ENCODE measurements at regions of chr7 and their contacts with region 1.

Region 1: GRCh38 chr7:36639826-36640225 is 84.5 kb downstream of the AOAH start:
- DNase-seq: peak; percentile 23 to 86 (median 71)
- ATAC-seq: peak; percentile 89 to 93
- H3K4me3 Mint-ChIP-seq: peak overlapping the region; percentile 53 to 88 (median 68)
- H3K27ac Mint-ChIP-seq: peak overlapping the region; percentile 92 to 99 (median 98)
- H3K4me1 Mint-ChIP-seq: peaks cover 48 to 97% (median 89%) of the 10 kb centered on the region in 4 donors
- H3K27me3 Mint-ChIP-seq: no peaks in the 10 kb centered on the region

Region 2: DNA sequence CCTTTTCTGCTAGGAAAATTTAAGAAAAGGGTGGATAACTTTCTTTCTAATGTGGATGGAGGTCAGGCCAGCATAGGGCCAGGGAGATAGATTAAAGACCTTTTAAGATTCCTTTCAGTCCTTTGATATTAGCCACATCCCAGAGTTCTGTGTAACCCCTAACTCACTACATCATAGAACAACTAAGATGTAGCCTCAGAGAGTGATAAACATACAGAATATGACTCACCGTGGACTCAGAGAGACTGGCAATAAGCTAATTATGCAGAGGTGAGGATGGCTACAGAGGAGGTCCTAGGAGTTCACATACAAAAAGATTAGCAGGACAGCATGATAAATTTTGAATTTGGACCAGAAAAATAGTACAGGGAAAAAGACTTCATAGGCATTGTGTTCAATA is 56.5 kb before region 1 on chr7:
- POLR2A ChIA-PET with region 1: no interaction called
- DNase-seq: no peak
- ATAC-seq: no peak
- H3K4me3 Mint-ChIP-seq: no peak overlapping the region
- H3K27ac Mint-ChIP-seq: peak overlapping the region in 4 of 10 donors; percentile 26 to 70 (median 38)
- H3K4me1 Mint-ChIP-seq: peaks cover 7 to 23% (median 13%) of the 10 kb centered on the region in 4 donors
- H3K27me3 Mint-ChIP-seq: no peaks in the 10 kb centered on the region

Region 3: GRCh38 chr7:36600869-36601530 is 38.8 kb before region 1 on chr7:
- POLR2A ChIA-PET with region 1: interaction called, 97 read pairs
- DNase-seq: no peak
- ATAC-seq: peak in 1 of 2 donors; percentile 80
- H3K4me3 Mint-ChIP-seq: peak overlapping the region in 2 of 10 donors; percentile 10 to 11
- H3K27ac Mint-ChIP-seq: peak overlapping the region in 8 of 10 donors; percentile 7 to 66 (median 47)
- H3K4me1 Mint-ChIP-seq: peaks cover 22 to 48% (median 44%) of the 10 kb centered on the region in 4 donors
- H3K27me3 Mint-ChIP-seq: no peaks in the 10 kb centered on the region

Region 4: DNA sequence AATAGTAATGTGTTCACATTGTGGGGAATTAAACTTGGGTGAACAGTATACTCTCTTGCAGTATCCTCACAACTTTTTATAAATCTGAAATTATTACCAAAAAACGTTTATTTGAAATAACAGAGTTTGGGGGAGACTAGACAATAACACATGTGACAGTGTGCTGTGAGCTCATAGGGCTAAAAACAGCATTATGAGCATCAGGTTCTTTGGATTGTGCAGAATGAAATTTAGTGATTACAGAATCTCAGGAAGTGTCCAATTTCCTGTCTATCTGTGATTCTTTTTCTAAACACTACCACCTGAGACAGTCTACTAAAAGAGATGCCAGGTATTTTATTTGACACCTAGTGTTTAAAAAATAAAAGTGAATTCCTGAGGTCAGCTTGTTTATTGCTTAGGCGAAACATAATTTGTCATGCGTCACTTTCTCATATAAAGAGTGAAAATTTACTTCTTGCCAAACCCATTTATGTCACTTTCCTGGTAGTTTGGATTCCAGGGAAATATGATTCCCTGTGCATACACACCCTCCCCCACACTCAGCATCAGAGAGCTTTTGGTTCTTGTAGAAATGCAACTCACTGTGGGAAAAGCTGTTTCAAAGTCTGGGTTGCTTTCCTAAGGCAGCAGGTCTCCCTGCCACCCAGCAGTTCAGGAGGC is 13.3 kb after region 1 on chr7:
- POLR2A ChIA-PET with region 1: interaction called, 15 read pairs
- DNase-seq: no peak
- ATAC-seq: no peak
- H3K4me3 Mint-ChIP-seq: peak overlapping the region in 1 of 10 donors; percentile 47
- H3K27ac Mint-ChIP-seq: peak overlapping the region in 7 of 10 donors; percentile 37 to 90 (median 75)
- H3K4me1 Mint-ChIP-seq: peaks cover 33 to 55% (median 41%) of the 10 kb centered on the region in 4 donors
- H3K27me3 Mint-ChIP-seq: no peaks in the 10 kb centered on the region

Region 5: DNA sequence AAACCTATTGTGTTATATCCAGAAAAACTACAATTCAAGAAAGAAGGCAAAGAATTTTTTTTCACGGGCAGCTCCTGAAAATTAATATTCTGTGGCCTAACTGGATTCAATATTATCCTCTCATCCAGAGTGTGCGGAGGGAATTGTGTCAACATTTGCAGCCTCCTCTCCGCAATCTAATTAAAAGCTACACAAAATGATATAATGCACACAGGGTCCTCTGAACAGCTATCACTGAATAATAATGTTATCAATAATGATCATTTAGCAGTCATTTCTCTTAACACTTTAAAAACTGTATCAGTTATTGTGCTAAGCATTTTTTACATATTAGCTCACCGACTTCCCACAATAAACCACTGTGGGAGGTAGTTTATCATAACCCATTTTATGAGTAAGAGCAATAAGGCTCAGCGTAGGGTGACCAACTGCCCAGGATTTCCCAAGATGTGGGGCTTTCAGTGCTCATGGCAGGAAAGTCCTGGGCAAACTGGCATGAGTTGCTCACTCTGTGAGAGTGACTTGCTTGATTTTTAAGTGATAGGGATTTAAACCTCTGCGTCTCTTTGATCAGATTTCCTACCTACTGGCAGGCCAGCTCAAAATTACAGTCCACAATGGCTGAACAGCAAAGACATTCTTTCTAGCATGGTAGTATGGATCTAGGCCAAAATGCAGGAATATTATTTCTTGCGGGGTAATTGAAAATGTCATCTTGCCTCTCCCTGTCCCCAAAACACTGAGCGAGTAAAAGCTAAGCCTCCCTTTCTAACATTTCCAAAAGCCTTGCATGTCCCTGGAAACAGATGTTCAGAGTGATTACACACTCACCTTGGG is 18.7 kb after region 1 on chr7:
- POLR2A ChIA-PET with region 1: interaction called, 15 read pairs
- DNase-seq: no peak
- ATAC-seq: no peak
- H3K4me3 Mint-ChIP-seq: peak overlapping the region in 1 of 10 donors; percentile 19
- H3K27ac Mint-ChIP-seq: peak overlapping the region in 9 of 10 donors; percentile 1 to 90 (median 52)
- H3K4me1 Mint-ChIP-seq: peaks cover 31 to 56% (median 37%) of the 10 kb centered on the region in 4 donors
- H3K27me3 Mint-ChIP-seq: no peaks in the 10 kb centered on the region

Region 6: GRCh38 chr7:36670585-36671431 is 31.0 kb after region 1 on chr7:
- POLR2A ChIA-PET with region 1: interaction called, 38 read pairs
- DNase-seq: peak; percentile 40 to 85 (median 72)
- ATAC-seq: peak; percentile 87 to 91
- H3K4me3 Mint-ChIP-seq: peak overlapping the region in 7 of 10 donors; percentile 27 to 71 (median 42)
- H3K27ac Mint-ChIP-seq: peak overlapping the region; percentile 12 to 94 (median 83)
- H3K4me1 Mint-ChIP-seq: peaks cover 22 to 38% (median 29%) of the 10 kb centered on the region in 4 donors
- H3K27me3 Mint-ChIP-seq: no peaks in the 10 kb centered on the region

Region 7: DNA sequence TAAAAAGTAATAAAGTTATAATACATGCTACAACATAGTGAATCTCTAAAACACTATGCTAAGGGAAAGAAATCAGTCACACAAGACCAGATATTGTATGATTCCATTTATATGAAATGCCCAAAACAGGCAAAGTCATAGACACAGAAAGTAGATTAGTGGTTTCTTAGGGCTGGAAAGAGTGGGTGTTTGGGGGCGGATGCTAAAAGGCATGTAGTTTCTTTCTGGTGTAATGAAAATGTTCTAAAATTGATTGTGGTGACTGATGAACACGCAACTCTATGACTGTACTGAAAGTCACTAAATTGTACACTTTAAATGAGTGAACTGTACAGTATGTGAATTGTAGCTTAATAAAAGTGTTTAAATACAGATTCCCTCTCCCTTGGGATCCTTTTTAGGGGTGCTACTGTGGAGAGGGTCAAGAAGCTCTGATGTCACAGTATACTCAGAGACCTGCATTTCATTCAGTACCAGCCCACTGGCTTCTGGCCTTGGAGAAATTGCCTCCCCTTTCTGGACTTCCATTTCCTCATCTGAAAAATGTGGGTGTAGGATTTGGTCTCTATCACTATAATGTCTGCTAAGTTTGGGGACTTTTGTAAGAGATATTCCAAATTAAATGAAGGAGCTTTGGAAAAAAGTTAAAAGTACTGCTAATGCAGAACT is 38.1 kb after region 1 on chr7:
- POLR2A ChIA-PET with region 1: interaction called, 20 read pairs
- DNase-seq: peak in 3 of 10 donors; percentile 23 to 42 (median 41)
- ATAC-seq: peak; percentile 16 to 52
- H3K4me3 Mint-ChIP-seq: peak overlapping the region; percentile 3 to 84 (median 66)
- H3K27ac Mint-ChIP-seq: peak overlapping the region; percentile 87 to 95 (median 94)
- H3K4me1 Mint-ChIP-seq: peaks cover 35 to 57% (median 46%) of the 10 kb centered on the region in 4 donors
- H3K27me3 Mint-ChIP-seq: no peaks in the 10 kb centered on the region

Region 8: GRCh38 chr7:36904802-36905201 is 265.0 kb after region 1 on chr7:
- POLR2A ChIA-PET with region 1: no interaction called
- DNase-seq: no peak
- ATAC-seq: no peak
- H3K4me3 Mint-ChIP-seq: no peak overlapping the region
- H3K27ac Mint-ChIP-seq: peak overlapping the region in 1 of 10 donors; percentile 4
- H3K4me1 Mint-ChIP-seq: peaks cover 0 to 23% (median 15%) of the 10 kb centered on the region in 4 donors
- H3K27me3 Mint-ChIP-seq: no peaks in the 10 kb centered on the region